ENCODE measurements at regions of chr7 and their contacts with region 1.

Region 1: GRCh38 chr7:794671-795329 is 37.5 kb upstream of the SUN1 start:
- DNase-seq: no peak
- ATAC-seq: no peak
- H3K4me3 ChIP-seq: no peak overlapping the region
- H3K27ac ChIP-seq: peak overlapping the region; percentile 81 to 90 (median 88)
- H3K4me1 ChIP-seq: peaks cover 18 to 26% of the 10 kb centered on the region in 2 donors
- H3K27me3 ChIP-seq: no peaks in the 10 kb centered on the region
- CTCF ChIP-seq: no peak
- POLR2A ChIP-seq: no peak

Region 2: GRCh38 chr7:828793-829561 is 34.2 kb after region 1 on chr7:
- in situ Hi-C with region 1: no loop called
- intact Hi-C with region 1: loop called (anchors 2 kb)
- DNase-seq: peak; percentile 55 to 68
- ATAC-seq: peak; percentile 76 to 80
- H3K4me3 ChIP-seq: no peak overlapping the region
- H3K27ac ChIP-seq: peak overlapping the region; percentile 91 to 96 (median 94)
- H3K4me1 ChIP-seq: peaks cover 90 to 95% of the 10 kb centered on the region in 2 donors
- H3K27me3 ChIP-seq: no peaks in the 10 kb centered on the region
- CTCF ChIP-seq: no peak
- POLR2A ChIP-seq: peak; percentile 55 to 70

Measured in gastrocnemius medialis (tissue), 4 donors.